Calu3 (cell line): ENCODE measurements at regions of chr3 and their contacts with region 1.

Region 1: GRCh38 chr3:23991683-23992628 is 46.9 kb downstream of the NR1D2 start:
- DNase-seq: no peak
- H3K4me3 Mint-ChIP-seq: no peak overlapping the region
- H3K27ac Mint-ChIP-seq: no peak overlapping the region
- H3K4me1 Mint-ChIP-seq: no peaks in the 10 kb centered on the region
- H3K27me3 Mint-ChIP-seq: no peaks in the 10 kb centered on the region
- CTCF ChIP-seq: no peak

Region 2: DNA sequence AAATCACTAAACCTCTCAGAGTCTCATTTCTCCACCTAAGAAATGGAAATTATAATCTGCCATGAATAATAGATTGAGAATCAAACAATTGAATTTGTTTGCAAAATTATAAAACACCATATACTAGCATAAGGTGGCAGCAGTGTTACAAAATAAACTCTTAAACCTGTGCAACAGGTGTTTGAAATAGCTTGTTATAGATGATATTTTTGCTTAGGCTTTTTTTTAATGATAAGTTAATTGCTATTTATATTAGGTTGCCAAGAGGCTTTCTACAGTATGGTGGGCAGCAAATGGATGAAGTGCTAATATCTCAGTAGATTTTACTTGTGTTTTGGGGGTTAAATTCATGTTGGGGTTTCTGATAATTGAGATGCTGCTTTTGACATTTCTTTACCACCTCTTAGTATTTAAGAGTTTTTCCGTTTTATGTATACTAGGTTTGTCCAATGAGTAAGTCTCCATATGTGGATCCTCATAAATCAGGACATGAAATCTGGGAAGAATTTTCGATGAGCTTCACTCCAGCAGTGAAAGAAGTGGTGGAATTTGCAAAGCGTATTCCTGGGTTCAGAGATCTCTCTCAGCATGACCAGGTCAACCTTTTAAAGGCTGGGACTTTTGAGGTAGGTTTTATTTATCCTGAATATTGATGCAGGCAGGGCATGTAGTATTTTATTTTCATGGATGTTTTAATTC is 27.3 kb before region 1 on chr3:
- CTCF ChIA-PET with region 1: interaction called, 10 read pairs
- intact Hi-C with region 1: no loop called
- DNase-seq: no peak
- H3K4me3 Mint-ChIP-seq: no peak overlapping the region
- H3K27ac Mint-ChIP-seq: no peak overlapping the region
- H3K4me1 Mint-ChIP-seq: peaks cover 14% of the 10 kb centered on the region
- H3K27me3 Mint-ChIP-seq: no peaks in the 10 kb centered on the region
- CTCF ChIP-seq: no peak